ENCODE measurements at regions of chr10 and their contacts with region 1.

Region 1: GRCh38 chr10:13956826-13957225 is 370.1 kb downstream of the PRPF18 start:
- DNase-seq: peak; percentile 49 to 85 (median 73)
- H3K4me3 ChIP-seq: no peak overlapping the region
- H3K27ac ChIP-seq: peak overlapping the region in 1 of 2 donors; percentile 56
- H3K4me1 ChIP-seq: peaks cover 7% of the 10 kb centered on the region
- H3K27me3 ChIP-seq: no peaks in the 10 kb centered on the region
- CTCF ChIP-seq: peak in 2 of 3 donors; percentile 29 to 36
- EP300 ChIP-seq: no peak
- POLR2A ChIP-seq: no peak

Region 2: DNA sequence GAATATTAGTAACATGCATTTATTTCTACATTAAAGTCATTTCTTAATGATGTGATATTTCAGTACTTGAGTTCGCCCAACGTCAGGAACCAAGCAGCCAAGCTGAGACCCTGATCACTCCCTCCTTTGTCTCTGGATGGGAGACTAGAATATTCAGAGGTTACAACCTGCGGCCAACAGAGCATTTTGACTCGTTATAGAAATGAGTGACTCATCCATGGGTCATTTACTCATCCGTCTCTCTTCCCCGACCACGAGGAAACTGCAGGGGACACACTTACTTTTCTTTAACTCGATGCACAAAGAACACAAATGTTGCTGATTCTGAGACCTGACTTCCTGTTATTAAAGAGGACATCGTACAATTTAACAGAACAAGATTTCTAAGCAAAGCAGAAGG is 30.6 kb after region 1 on chr10:
- intact Hi-C with region 1: loop called in 1 of 4 experiments (anchors 1 kb)
- DNase-seq: no peak
- H3K4me3 ChIP-seq: no peak overlapping the region
- H3K27ac ChIP-seq: no peak overlapping the region
- H3K4me1 ChIP-seq: peaks cover 11% of the 10 kb centered on the region
- H3K27me3 ChIP-seq: no peaks in the 10 kb centered on the region
- CTCF ChIP-seq: no peak
- EP300 ChIP-seq: no peak
- POLR2A ChIP-seq: no peak

Region 3: GRCh38 chr10:14032395-14032998 is 75.7 kb after region 1 on chr10:
- intact Hi-C with region 1: no loop called
- DNase-seq: peak in 2 of 5 donors; percentile 23 to 41
- H3K4me3 ChIP-seq: no peak overlapping the region
- H3K27ac ChIP-seq: no peak overlapping the region
- H3K4me1 ChIP-seq: no peaks in the 10 kb centered on the region
- H3K27me3 ChIP-seq: no peaks in the 10 kb centered on the region
- CTCF ChIP-seq: no peak
- EP300 ChIP-seq: no peak
- POLR2A ChIP-seq: no peak

Measured in ovary (tissue), 10 donors.